SK-N-SH (cell line): ENCODE measurements at regions of chr10 and their contacts with region 1.

Region 1: DNA sequence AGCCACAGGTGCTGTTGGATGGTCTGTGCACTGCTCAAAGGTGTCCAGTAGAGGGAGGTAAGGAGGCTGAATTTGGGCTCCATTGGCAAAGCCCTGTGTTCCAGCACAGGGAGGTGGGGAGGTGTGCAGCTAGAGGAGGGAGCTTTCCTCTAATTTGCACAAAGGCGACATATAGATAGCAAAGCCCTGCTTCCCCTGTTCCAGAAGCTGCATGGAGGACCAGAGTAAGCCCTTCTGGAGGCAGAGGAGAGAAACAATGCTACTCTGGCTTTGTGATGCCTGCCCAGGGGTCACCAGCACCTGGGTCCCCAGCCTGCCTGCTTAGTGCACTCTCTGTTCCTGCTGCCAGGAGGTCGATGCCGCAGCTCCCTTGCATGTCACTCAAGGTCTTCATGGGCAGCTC is 3.4 kb upstream of the ARHGAP22 start:
- DNase-seq: peak; percentile 67
- H3K4me3 ChIP-seq: no peak overlapping the region
- H3K27ac ChIP-seq: peak overlapping the region in 1 of 2 experiments; percentile 80; a peak in 2 of 4 replicates
- H3K4me1 ChIP-seq: peaks cover 29 to 51% of the 10 kb centered on the region in 2 experiments
- H3K27me3 ChIP-seq: no peaks in the 10 kb centered on the region
- CTCF ChIP-seq: peak; percentile 75
- EP300 ChIP-seq: no peak
- RAD21 ChIP-seq: peak; percentile 65

Region 2: DNA sequence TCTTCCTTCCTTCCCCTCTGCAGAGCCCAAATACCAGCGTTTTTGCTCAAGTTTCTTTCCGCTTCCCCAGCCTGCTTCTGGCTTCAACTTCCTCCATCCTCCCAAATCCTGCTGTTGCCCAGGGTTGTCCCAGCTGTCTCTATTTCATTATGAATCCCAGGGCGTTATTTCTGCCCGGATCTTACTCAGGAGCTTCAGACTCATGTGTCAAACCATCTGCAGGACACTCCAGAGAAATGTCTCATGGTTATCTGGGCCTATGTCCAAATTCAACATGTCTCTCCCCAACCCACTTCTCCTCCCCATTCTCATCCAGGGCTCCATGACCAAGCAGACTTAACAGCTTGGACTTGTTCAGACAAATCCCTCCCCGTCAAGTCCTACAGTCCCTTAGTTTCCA is 19.0 kb before region 1 on chr10:
- CTCF ChIA-PET with region 1: interaction called, 27 read pairs
- POLR2A ChIA-PET with region 1: no interaction called
- DNase-seq: no peak
- H3K4me3 ChIP-seq: no peak overlapping the region
- H3K27ac ChIP-seq: peak overlapping the region; percentile 20 to 87
- H3K4me1 ChIP-seq: peaks cover 0 to 28% of the 10 kb centered on the region in 2 experiments; a peak in 3 of 4 replicates
- H3K27me3 ChIP-seq: no peaks in the 10 kb centered on the region
- CTCF ChIP-seq: no peak
- EP300 ChIP-seq: no peak
- RAD21 ChIP-seq: no peak

Region 3: DNA sequence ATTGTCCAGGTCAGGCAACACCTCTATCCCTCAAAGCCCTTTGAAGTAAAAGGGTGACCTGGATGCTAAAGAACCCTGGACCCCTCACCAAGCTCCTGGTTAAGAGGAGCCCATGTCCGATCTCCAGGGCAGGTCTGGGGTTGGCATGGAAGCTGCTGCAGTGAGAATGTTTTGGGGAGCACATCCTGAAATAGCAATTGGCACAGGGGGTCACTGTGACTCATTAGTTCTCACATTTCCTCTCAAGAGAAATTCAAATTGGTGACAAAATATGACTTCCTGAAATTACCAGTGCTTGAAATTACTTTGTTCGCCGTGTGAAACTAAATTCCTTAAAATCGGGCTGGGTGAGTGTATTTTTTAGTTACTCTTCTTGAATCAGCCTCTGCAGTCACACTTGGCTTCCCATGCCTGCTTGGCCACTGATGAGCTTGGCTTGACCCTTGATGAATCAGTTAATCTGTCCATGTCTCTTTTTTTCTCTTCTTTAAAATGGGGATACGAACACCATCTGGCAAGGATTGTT is 15.4 kb after region 1 on chr10:
- CTCF ChIA-PET with region 1: interaction called, 45 read pairs
- POLR2A ChIA-PET with region 1: no interaction called
- DNase-seq: no peak
- H3K4me3 ChIP-seq: no peak overlapping the region
- H3K27ac ChIP-seq: no peak overlapping the region
- H3K4me1 ChIP-seq: peaks cover 0 to 27% of the 10 kb centered on the region in 2 experiments; a peak in 1 of 4 replicates
- H3K27me3 ChIP-seq: no peaks in the 10 kb centered on the region
- CTCF ChIP-seq: no peak
- EP300 ChIP-seq: no peak
- RAD21 ChIP-seq: no peak